ENCODE measurements at regions of chr6 and their contacts with region 1.

Region 1: DNA sequence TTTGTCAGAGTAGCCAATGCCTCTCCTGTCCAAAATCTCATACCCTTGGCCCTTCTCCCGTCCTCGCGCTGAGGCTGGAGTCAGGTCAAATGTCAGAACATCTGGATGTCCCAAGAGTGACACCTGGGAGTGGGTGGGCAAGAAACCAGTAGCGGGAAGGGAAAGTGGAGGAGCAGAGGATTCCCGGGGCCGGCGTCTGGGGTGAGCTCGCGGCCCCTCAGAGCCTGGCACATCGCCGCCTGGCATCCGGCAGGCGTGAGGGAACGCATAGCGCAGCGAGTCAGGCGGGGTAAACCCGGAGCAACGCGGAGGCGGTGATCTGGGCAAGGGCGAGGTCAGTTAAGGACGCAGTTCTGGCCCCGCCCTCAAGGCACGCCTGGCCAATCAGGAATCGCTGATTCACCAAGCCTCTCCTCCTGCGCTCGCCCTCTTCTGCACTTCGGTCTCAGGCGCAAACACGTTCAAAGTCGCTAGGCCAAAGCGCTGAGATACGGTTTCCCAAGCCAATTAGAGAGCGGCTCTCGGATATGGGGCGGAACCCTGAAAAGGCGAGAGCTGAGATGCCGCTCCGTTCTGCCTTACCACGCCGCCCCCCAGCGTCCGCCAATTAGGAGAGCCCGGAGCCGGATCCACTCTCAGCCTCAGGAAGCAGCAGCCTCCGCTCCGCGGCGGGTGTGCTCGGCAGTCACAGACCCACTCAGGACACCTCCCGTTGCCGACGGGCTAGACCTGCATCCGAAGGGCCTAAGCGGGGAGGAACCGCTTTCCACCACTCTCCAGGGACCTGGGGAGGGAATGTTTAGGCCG is 22.5 kb downstream of the VPS52 start:
- DNase-seq: peak; percentile 95
- H3K4me3 ChIP-seq: peak overlapping the region; percentile 81
- CTCF ChIP-seq: peak; percentile 29

Region 2: GRCh38 chr6:33014841-33015634 is 234.1 kb before region 1 on chr6:
- CTCF ChIA-PET with region 1: interaction called, 96 read pairs
- POLR2A ChIA-PET with region 1: no interaction called
- DNase-seq: peak; percentile 55
- H3K4me3 ChIP-seq: no peak overlapping the region
- CTCF ChIP-seq: peak; percentile 61

Region 3: DNA sequence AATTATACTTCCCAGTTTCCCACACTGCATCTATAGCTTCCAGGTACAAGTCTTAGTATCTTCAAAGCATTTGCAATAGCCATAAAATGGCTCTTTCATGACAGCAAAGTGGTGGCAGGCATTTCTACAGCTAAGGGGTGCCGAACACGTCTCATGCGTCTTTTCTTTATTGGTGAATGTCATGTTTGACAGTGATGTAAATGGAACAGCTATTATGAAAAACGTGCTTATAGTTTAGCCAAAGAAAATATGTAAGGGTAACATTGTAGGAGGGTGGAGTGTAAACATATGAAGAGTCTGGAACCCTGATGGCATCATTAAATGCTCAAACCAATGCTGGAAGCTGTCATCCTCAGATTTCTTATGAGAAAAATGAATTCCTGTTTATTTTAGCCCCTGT is 94.8 kb before region 1 on chr6:
- CTCF ChIA-PET with region 1: interaction called, 91 read pairs
- POLR2A ChIA-PET with region 1: interaction called, 3 read pairs
- DNase-seq: no peak
- H3K4me3 ChIP-seq: no peak overlapping the region
- CTCF ChIP-seq: no peak

Region 4: GRCh38 chr6:33208091-33208967 is 40.8 kb before region 1 on chr6 and contains the start of gene RING1:
- CTCF ChIA-PET with region 1: interaction called, 36 read pairs
- POLR2A ChIA-PET with region 1: interaction called, 25 read pairs
- DNase-seq: no peak
- H3K4me3 ChIP-seq: peak within 1 kb of the TSS; percentile 83
- CTCF ChIP-seq: no peak

Region 5: GRCh38 chr6:33264015-33264414 is 14.9 kb after region 1 on chr6:
- CTCF ChIA-PET with region 1: interaction called, 33 read pairs
- POLR2A ChIA-PET with region 1: interaction called, 11 read pairs
- DNase-seq: no peak
- H3K4me3 ChIP-seq: no peak overlapping the region
- CTCF ChIP-seq: no peak

Region 6: DNA sequence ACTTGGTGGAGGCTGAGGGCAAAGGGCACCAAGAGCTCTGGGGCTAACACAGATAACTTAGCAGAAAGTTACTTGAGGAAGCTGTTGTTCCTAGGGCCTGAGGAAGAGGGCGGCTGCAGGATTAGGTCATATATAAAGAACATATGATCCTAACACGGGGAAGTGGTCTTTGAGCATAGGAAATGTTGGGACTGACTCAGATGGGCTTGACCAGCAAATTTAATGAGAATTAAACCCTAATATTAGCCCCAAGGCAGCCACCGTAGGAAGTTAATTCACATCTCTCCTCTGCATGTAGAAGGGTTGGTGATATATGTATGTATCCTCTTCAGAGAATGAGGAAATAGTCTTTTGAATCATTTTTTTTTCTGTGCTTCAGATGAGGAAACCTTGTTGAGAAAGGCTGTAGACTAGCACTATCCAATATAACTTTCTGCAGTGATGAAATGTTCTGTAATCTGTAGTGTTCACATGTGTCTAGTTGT is 196.0 kb after region 1 on chr6:
- CTCF ChIA-PET with region 1: no interaction called
- POLR2A ChIA-PET with region 1: no interaction called
- DNase-seq: no peak
- H3K4me3 ChIP-seq: no peak overlapping the region
- CTCF ChIP-seq: no peak

Measured in AG04449 (cell line).